ENCODE measurements at regions of chr22 and their contacts with region 1.

Region 1: GRCh38 chr22:34966980-34967565 is 98.9 kb upstream of the ISX start:
- DNase-seq: no peak
- ATAC-seq: no peak
- H3K4me3 ChIP-seq: no peak overlapping the region
- H3K27ac ChIP-seq: no peak overlapping the region
- H3K4me1 ChIP-seq: no peaks in the 10 kb centered on the region
- H3K27me3 ChIP-seq: no peaks in the 10 kb centered on the region
- CTCF ChIP-seq: no peak
- POLR2A ChIP-seq: no peak
- RAD21 ChIP-seq: no peak

Region 2: DNA sequence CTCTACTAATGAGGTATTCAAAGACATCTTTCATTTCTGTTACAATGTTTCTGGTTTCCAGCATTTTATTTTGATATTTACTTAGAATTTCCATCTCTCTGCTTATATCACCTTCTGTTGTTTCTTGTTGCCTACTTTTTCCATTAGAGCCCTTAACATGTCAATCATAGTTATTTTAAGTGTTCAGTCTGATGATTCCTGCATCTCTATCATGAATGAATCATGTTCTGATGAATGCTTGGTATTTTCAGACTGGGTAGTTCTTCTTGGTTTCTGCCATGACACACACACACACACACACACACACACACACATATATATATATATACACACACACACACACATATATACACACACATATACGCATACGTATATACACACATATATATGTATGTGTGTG is 387.6 kb before region 1 on chr22:
- CTCF ChIA-PET with region 1: no interaction called
- POLR2A ChIA-PET with region 1: no interaction called
- dilution Hi-C with region 1: no loop called
- in situ Hi-C with region 1: no loop called
- intact Hi-C with region 1: no loop called
- DNase-seq: no peak
- ATAC-seq: no peak
- H3K4me3 ChIP-seq: no peak overlapping the region
- H3K27ac ChIP-seq: no peak overlapping the region
- H3K4me1 ChIP-seq: no peaks in the 10 kb centered on the region
- H3K27me3 ChIP-seq: no peaks in the 10 kb centered on the region
- CTCF ChIP-seq: no peak
- POLR2A ChIP-seq: no peak
- RAD21 ChIP-seq: no peak

Region 3: GRCh38 chr22:35023692-35024363 is 56.8 kb after region 1 on chr22:
- CTCF ChIA-PET with region 1: no interaction called
- POLR2A ChIA-PET with region 1: no interaction called
- dilution Hi-C with region 1: no loop called
- in situ Hi-C with region 1: loop called (anchors 10 kb)
- intact Hi-C with region 1: no loop called
- DNase-seq: no peak
- ATAC-seq: no peak
- H3K4me3 ChIP-seq: no peak overlapping the region
- H3K27ac ChIP-seq: no peak overlapping the region
- H3K4me1 ChIP-seq: no peaks in the 10 kb centered on the region
- H3K27me3 ChIP-seq: no peaks in the 10 kb centered on the region
- CTCF ChIP-seq: peak; percentile 60
- POLR2A ChIP-seq: no peak
- RAD21 ChIP-seq: peak; percentile 65

Region 4: DNA sequence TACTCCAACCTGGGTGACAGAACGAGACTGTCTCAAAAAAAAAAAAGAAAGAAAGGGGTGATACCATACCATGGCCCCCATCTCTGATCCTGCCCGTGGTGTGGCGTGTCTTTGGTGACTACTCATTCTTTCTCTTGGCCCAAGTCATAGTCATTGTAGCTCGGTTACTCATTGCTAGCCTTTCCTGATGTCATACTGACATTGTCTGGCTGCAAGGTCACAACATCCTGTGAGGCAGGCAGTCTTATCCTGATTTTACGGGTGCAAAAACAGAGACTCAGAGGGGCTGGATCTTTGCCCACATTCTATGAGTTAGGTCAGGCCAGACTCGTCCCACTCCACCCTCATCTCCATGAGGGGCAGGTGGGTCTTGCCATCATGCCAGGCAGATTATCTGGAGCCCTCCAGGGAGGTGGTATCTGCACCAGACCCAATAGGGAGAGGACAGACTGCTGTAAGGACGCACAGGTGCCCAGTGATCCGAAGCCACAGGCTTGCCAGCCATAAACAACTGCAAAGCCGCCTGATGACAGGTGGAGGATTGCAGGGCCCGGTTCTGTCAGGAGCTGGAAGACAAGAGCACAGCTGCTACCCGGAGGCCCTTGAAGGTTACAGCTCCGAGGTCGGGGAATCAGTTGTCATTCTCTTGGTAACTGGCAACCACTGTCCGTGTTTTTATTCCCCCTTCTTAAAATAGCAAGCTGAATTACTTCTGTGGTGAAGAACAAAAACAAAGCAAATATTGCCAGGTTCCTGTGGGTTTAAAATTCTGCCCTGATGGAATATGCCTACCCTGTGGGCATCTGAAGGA is 346.4 kb after region 1 on chr22:
- CTCF ChIA-PET with region 1: no interaction called
- POLR2A ChIA-PET with region 1: no interaction called
- dilution Hi-C with region 1: no loop called
- in situ Hi-C with region 1: no loop called
- intact Hi-C with region 1: no loop called
- DNase-seq: peak; percentile 96
- ATAC-seq: peak; percentile 65
- H3K4me3 ChIP-seq: no peak overlapping the region
- H3K27ac ChIP-seq: no peak overlapping the region
- H3K4me1 ChIP-seq: peaks cover 18% of the 10 kb centered on the region
- H3K27me3 ChIP-seq: no peaks in the 10 kb centered on the region
- CTCF ChIP-seq: no peak
- POLR2A ChIP-seq: 0 out of 2 replicates have a peak, but pooled peaks have one; percentile 14
- RAD21 ChIP-seq: no peak